Activated CD4-positive, alpha-beta T cell treated with anti-CD3 and anti-CD28 coated beads for 36 hours (primary cell): ENCODE measurements at regions of chr17 and their contacts with region 1.

Region 1: GRCh38 chr17:82450170-82451106 is at the start of gene CYBC1:
- DNase-seq: peak; percentile 98
- ATAC-seq: peak; percentile 69
- H3K4me3 Mint-ChIP-seq: peak within 1 kb of the TSS; percentile 87
- H3K27ac Mint-ChIP-seq: peak within 1 kb of the TSS; percentile 97
- H3K4me1 Mint-ChIP-seq: peaks cover 46% of the 10 kb centered on the region
- H3K27me3 Mint-ChIP-seq: no peaks in the 10 kb centered on the region
- total RNA-seq, gene CYBC1: 286 to 329 TPM

Region 2: DNA sequence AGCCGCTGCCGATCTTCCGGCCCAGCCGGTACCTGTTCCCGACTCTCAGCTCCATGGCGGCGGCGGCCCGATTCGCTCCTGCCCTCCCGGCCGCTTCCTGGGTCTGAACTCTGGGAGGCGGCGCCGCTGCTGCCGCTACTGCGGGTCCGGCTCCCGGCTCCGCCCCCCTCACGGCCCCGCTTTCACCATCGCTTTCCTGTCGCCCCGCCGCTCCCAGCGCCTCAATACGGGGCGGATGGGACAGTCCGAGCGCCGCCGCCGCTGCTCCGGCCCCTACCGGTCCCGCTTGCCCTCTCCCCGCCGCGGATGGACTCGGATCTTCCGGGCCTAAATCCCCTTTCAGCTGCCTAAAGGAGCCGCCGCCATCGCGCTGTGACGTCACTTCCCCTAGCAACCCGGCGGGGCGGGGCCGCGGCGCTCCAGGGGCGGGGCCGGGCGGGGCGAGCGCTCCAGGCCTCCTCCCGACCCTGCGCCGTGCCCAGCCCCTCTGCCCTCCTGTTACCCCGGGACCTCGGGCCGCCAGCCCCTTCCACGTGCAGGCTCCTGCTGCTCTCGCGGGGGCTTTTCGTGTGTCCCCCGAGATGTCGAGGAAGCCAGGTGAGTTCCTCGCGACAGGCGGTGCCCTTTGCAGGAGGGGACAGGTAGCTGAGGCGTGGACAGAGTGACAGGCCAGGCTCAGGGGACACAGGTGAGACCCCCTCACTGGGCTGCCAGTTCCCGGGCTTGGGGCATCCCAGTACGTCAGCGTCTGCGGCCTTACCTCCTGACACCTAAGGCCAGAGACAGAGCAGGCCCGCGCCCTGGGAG is 176.9 kb before region 1 on chr17 and contains the start of gene CSNK1D:
- CTCF ChIA-PET with region 1: no interaction called
- POLR2A ChIA-PET with region 1: no interaction called
- intact Hi-C with region 1: loop called in 1 of 2 experiments (anchors 1 kb)
- DNase-seq: peak; percentile 96
- ATAC-seq: peak; percentile 81
- H3K4me3 Mint-ChIP-seq: peak within 1 kb of the TSS; percentile 90
- H3K27ac Mint-ChIP-seq: peak within 1 kb of the TSS; percentile 94
- H3K4me1 Mint-ChIP-seq: peaks cover 39% of the 10 kb centered on the region
- H3K27me3 Mint-ChIP-seq: no peaks in the 10 kb centered on the region
- total RNA-seq, gene CSNK1D: 118 to 182 TPM

Region 3: GRCh38 chr17:82297714-82298537 is 152.5 kb before region 1 on chr17:
- CTCF ChIA-PET with region 1: no interaction called
- POLR2A ChIA-PET with region 1: interaction called, 9 read pairs
- intact Hi-C with region 1: loop called in 1 of 2 experiments (anchors 1 kb)
- DNase-seq: peak; percentile 96
- ATAC-seq: peak; percentile 62
- H3K4me3 Mint-ChIP-seq: peak overlapping the region; percentile 80
- H3K27ac Mint-ChIP-seq: peak overlapping the region; percentile 100
- H3K4me1 Mint-ChIP-seq: peaks cover 70% of the 10 kb centered on the region
- H3K27me3 Mint-ChIP-seq: no peaks in the 10 kb centered on the region

Region 4: GRCh38 chr17:82407255-82407654 is 43.2 kb before region 1 on chr17:
- CTCF ChIA-PET with region 1: no interaction called
- POLR2A ChIA-PET with region 1: no interaction called
- intact Hi-C with region 1: no loop called
- DNase-seq: no peak
- ATAC-seq: no peak
- H3K4me3 Mint-ChIP-seq: no peak overlapping the region
- H3K27ac Mint-ChIP-seq: no peak overlapping the region
- H3K4me1 Mint-ChIP-seq: peaks cover 7% of the 10 kb centered on the region
- H3K27me3 Mint-ChIP-seq: no peaks in the 10 kb centered on the region

Region 5: DNA sequence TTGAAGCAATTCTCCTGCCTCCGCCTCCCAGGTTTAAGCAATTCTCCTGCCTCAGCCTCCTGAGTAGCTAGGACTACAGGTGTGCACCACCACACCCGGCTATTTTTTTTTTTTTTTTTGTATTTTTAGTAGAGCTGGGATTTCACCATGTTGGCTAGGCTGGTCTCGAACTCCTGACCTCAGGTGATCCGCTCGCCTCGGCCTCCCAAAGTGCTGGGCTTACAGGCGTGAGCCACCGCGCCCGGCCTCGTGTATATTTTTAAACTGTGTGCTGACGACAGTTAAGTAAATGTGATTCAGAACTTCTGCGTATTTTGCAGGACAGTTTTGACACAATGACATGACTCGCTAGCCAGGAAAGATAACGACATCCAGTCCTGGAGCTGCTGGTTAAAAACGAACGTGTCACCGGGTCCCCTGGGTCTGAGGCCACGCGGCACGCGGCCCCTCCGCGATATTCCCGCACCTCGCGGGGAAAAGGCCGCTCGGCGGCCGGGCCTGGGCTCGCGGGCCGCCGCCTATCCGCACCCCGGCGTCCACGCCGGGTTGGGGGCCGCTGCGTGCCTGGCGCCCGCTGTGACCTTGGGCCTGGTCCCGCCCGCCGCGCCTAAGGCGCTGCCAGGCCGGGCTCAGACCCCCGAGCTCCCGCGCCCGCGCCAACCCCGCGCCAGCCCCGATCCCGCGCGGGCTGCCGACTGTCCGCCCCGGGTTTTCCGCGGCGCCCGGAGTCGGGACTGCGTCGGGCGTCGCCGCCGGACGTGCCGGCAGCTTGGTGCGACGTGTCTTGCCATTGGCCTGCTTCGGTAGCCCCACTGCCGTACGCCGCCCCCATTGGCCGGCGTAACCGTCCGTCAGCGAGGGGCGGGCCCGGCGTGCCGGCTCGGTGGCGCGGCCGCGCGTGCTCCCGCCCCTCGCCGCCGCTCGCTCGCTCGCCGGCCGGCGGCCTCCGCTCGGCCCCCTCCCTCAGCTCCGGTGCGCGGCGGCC is 68.7 kb after region 1 on chr17 and contains the start of gene FOXK2:
- CTCF ChIA-PET with region 1: no interaction called
- POLR2A ChIA-PET with region 1: interaction called, 7 read pairs
- intact Hi-C with region 1: loop called (anchors 1 to 2 kb)
- DNase-seq: peak; percentile 95
- ATAC-seq: peak; percentile 98
- H3K4me3 Mint-ChIP-seq: peak within 1 kb of the TSS; percentile 88
- H3K27ac Mint-ChIP-seq: peak within 1 kb of the TSS; percentile 92
- H3K4me1 Mint-ChIP-seq: peaks cover 24% of the 10 kb centered on the region
- H3K27me3 Mint-ChIP-seq: no peaks in the 10 kb centered on the region
- total RNA-seq, gene FOXK2: 58.1 to 75.4 TPM

Region 6: GRCh38 chr17:82648166-82648668 is 197.8 kb after region 1 on chr17 and contains the start of gene WDR45B:
- CTCF ChIA-PET with region 1: no interaction called
- POLR2A ChIA-PET with region 1: no interaction called
- intact Hi-C with region 1: loop called in 1 of 2 experiments (anchors 1 kb)
- DNase-seq: peak; percentile 95
- ATAC-seq: peak; percentile 88
- H3K4me3 Mint-ChIP-seq: peak within 1 kb of the TSS; percentile 82
- H3K27ac Mint-ChIP-seq: peak within 1 kb of the TSS; percentile 65
- H3K4me1 Mint-ChIP-seq: peaks cover 24% of the 10 kb centered on the region
- H3K27me3 Mint-ChIP-seq: no peaks in the 10 kb centered on the region
- total RNA-seq, gene WDR45B: 74.1 to 74.8 TPM

Region 7: GRCh38 chr17:82716203-82717010 is 266.0 kb after region 1 on chr17 and contains the start of gene FN3KRP:
- CTCF ChIA-PET with region 1: no interaction called
- POLR2A ChIA-PET with region 1: no interaction called
- intact Hi-C with region 1: loop called in 1 of 2 experiments (anchors 1 kb)
- DNase-seq: peak; percentile 95
- ATAC-seq: peak; percentile 91
- H3K4me3 Mint-ChIP-seq: peak within 1 kb of the TSS; percentile 93
- H3K27ac Mint-ChIP-seq: peak within 1 kb of the TSS; percentile 88
- H3K4me1 Mint-ChIP-seq: peaks cover 10% of the 10 kb centered on the region
- H3K27me3 Mint-ChIP-seq: no peaks in the 10 kb centered on the region
- total RNA-seq, gene FN3KRP: 28.3 to 36.3 TPM